Dorsolateral prefrontal cortex (tissue), 120 donors: ENCODE measurements at regions of chr9 and their contacts with region 1.

Region 1: DNA sequence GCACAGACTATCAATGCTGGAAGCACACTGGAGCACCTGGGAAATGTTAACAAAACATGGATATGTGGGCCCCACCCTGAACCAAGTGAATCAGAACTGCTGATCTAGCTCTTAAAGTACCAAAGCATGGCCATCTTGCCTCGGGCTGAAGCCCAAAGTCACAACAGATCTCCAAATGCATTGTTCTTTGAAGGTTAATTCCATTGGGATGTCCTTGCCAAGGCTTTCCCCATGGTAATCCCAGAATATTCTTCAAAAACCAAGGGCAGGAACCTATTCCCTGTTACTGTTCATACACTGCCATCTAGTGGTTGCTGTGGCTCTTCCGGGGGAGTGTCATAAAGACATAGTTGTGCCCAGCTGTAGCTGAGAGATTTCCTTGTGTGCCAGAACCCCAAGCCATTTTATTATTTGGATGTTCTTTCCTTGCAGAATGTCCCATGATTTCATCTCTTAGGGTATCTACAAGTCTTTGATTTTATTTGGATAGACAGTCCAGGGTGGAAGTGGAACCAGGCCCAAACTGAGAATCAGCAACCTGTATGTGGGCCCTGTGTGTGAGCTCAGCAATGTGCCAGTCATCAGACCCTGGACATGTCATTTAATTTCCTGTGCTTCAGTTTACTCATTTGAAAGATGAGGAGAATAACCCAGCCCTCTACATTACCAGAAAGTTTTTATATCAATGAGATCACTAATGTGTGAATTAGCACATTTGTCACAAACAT is 290.0 kb downstream of the ACTL7B start:
- DNase-seq: peak in 8 of 10 donors; percentile 10 to 70 (median 43)
- H3K4me3 ChIP-seq: no peak overlapping the region
- H3K27ac ChIP-seq: peak overlapping the region in 3 of 59 donors; percentile 6 to 24 (median 10)
- H3K27me3 ChIP-seq: peaks cover 0 to 12% (median 0%) of the 10 kb centered on the region in 45 donors
- CTCF ChIP-seq: peak; percentile 68 to 96 (median 88)

Region 2: GRCh38 chr9:107465467-107466451 is 1100.1 kb before region 1 on chr9:
- intact Hi-C with region 1: loop called (anchors 5 kb)
- DNase-seq: peak in 9 of 10 donors; percentile 29 to 77 (median 49)
- H3K4me3 ChIP-seq: peak overlapping the region; percentile 37 to 84 (median 73)
- H3K27ac ChIP-seq: peak overlapping the region in 4 of 59 donors; percentile 48 to 71 (median 62)
- H3K27me3 ChIP-seq: peaks cover 0 to 5% (median 0%) of the 10 kb centered on the region in 45 donors
- CTCF ChIP-seq: peak; percentile 41 to 94 (median 84)

Region 3: GRCh38 chr9:107489687-107490605 is 1075.9 kb before region 1 on chr9 and contains the start of gene KLF4:
- intact Hi-C with region 1: loop called (anchors 2 to 5 kb)
- DNase-seq: peak; percentile 33 to 88 (median 79)
- H3K4me3 ChIP-seq: peak within 1 kb of the TSS; percentile 44 to 89 (median 70)
- H3K27ac ChIP-seq: peak within 1 kb of the TSS in 50 of 59 donors; percentile 4 to 92 (median 72)
- H3K27me3 ChIP-seq: peaks cover 0 to 20% (median 0%) of the 10 kb centered on the region in 45 donors
- CTCF ChIP-seq: peak in 6 of 56 donors; percentile 7 to 37 (median 17)
- total RNA-seq, gene KLF4: 1.7 to 32.7 (median 8.3) TPM

Region 4: GRCh38 chr9:107942872-107943271 is 622.9 kb before region 1 on chr9:
- intact Hi-C with region 1: no loop called
- DNase-seq: no peak
- H3K4me3 ChIP-seq: no peak overlapping the region
- H3K27ac ChIP-seq: no peak overlapping the region
- H3K27me3 ChIP-seq: no peaks in the 10 kb centered on the region
- CTCF ChIP-seq: no peak

Region 5: DNA sequence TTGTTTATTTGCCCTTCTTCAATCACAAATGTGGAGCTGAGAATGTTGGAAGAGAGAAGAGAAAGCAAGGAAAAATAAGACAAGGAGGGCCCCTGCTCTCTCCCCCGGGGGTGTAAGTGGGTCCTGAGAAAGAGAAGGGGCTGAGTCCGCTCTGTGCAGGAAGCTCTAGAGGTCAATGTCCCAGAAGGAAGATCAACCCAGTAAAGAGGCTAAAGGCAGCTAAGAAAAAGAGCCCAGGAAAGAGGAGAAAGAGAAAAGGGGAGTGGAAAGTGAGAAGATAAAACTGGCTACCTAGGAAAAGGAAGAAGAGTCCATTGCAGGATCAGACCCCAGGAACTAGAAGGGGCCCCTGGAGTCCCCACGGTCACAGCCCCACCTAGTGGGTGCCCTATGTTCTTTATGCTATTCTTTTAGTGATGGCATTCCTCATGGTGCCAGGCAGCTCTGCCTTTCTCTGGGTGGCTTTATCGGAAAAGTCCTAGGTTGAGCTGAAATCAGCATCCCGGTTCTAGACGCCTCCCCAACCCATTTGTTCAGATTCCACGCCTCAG is 293.4 kb before region 1 on chr9:
- intact Hi-C with region 1: loop called in 1 of 2 experiments (anchors 10 kb)
- DNase-seq: peak in 9 of 10 donors; percentile 4 to 59 (median 42)
- H3K4me3 ChIP-seq: peak overlapping the region in 32 of 59 donors; percentile 1 to 43 (median 22)
- H3K27ac ChIP-seq: peak overlapping the region in 9 of 59 donors; percentile 6 to 49 (median 25)
- H3K27me3 ChIP-seq: no peaks in the 10 kb centered on the region
- CTCF ChIP-seq: peak; percentile 35 to 83 (median 66)

Region 6: GRCh38 chr9:108363311-108363710 is 202.5 kb before region 1 on chr9:
- intact Hi-C with region 1: no loop called
- DNase-seq: no peak
- H3K4me3 ChIP-seq: no peak overlapping the region
- H3K27ac ChIP-seq: no peak overlapping the region
- H3K27me3 ChIP-seq: no peaks in the 10 kb centered on the region
- CTCF ChIP-seq: no peak

Region 7: DNA sequence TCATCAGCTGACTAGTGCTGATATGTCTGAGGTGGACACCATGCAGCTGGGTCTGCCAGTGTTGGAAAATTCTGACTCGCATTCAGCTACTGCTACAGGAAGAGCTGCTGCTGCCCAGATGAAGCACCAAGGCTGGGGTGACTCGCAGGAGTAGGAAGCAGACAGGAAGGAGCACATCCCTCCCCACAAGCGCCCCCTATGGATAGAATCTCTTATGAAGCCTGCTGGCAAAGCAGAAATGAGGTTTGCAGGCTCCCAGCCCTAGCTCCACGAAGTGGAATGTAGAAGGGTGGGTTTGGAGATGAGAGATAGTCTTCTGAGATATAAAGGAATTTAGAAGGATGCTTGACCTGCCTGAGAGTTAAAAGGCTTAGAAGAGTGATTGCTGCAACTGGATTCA is 153.1 kb before region 1 on chr9:
- intact Hi-C with region 1: loop called in 1 of 2 experiments (anchors 5 kb)
- DNase-seq: no peak
- H3K4me3 ChIP-seq: no peak overlapping the region
- H3K27ac ChIP-seq: no peak overlapping the region
- H3K27me3 ChIP-seq: peaks cover 0 to 6% (median 0%) of the 10 kb centered on the region in 45 donors
- CTCF ChIP-seq: peak in 1 of 56 donors; percentile 7

Region 8: DNA sequence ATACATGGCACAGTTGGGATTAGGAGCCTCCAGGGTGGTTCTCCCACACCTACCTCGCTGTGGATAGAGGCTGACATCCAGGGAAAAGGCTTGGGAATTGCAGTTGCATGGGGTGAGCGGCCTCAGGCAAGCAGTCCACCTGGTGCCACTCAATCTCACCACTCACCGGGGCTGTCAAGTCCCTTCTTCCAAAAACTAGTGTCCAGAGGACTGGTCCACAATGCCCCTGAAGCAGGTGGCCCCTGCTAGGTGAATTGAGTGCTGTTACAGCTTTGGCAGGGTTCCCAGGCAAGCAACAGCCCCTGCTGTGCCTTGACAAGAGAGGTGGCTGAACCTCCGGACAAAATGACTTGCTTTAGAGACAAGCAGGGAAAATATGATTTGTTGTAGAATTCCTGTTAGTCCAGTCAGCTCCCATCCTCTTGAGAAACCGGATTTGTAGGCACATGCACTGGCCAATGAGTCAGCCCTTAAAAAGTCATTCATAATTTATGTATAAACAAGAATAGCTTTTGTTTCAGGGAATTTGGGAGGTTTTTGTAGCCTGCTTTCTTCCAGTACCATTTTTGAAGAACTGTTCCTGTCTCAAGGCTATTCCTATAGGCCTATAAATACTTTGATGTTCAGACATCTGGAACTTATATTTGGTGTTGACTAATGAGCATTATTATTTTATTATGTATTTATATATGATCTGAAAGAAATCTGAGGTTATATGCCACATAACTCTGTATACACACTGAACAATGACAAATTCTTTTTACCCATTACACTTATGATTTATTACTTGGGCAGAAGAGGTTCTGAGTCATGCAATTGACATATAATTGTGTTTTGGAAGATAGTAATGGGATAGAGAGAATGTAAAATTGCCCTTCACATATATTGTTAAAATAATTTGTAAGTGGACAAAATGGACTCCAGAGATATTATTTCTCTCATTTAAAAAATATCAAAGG is 121.1 kb before region 1 on chr9:
- intact Hi-C with region 1: loop called in 1 of 2 experiments (anchors 10 kb)
- DNase-seq: no peak
- H3K4me3 ChIP-seq: no peak overlapping the region
- H3K27ac ChIP-seq: peak overlapping the region in 28 of 59 donors; percentile 5 to 89 (median 70)
- H3K27me3 ChIP-seq: no peaks in the 10 kb centered on the region
- CTCF ChIP-seq: no peak